PC-9 (cell line): ENCODE measurements at regions of chr3 and their contacts with region 1.

Region 1: GRCh38 chr3:160941885-160942494 is 163.2 kb downstream of the B3GALNT1 start:
- DNase-seq: peak; percentile 50 to 66
- H3K4me3 ChIP-seq: no peak overlapping the region
- H3K27ac ChIP-seq: no peak overlapping the region
- H3K4me1 ChIP-seq: no peaks in the 10 kb centered on the region
- H3K27me3 ChIP-seq: no peaks in the 10 kb centered on the region
- CTCF ChIP-seq: peak; percentile 93

Region 2: GRCh38 chr3:160577556-160578195 is 364.3 kb before region 1 on chr3:
- CTCF ChIA-PET with region 1: interaction called, 3 read pairs
- POLR2A ChIA-PET with region 1: no interaction called
- intact Hi-C with region 1: loop called (anchors 1 kb)
- DNase-seq: peak in 1 of 2 experiments; percentile 44
- H3K4me3 ChIP-seq: no peak overlapping the region
- H3K27ac ChIP-seq: no peak overlapping the region
- H3K4me1 ChIP-seq: peaks cover 7% of the 10 kb centered on the region; the same call in 1 of the 2 replicates
- H3K27me3 ChIP-seq: no peaks in the 10 kb centered on the region
- CTCF ChIP-seq: peak; percentile 44

Region 3: GRCh38 chr3:160686955-160687535 is 254.9 kb before region 1 on chr3:
- CTCF ChIA-PET with region 1: interaction called, 4 read pairs
- POLR2A ChIA-PET with region 1: no interaction called
- intact Hi-C with region 1: loop called (anchors 5 kb)
- DNase-seq: no peak
- H3K4me3 ChIP-seq: no peak overlapping the region
- H3K27ac ChIP-seq: no peak overlapping the region
- H3K4me1 ChIP-seq: no peaks in the 10 kb centered on the region
- H3K27me3 ChIP-seq: no peaks in the 10 kb centered on the region
- CTCF ChIP-seq: peak; percentile 73

Region 4: DNA sequence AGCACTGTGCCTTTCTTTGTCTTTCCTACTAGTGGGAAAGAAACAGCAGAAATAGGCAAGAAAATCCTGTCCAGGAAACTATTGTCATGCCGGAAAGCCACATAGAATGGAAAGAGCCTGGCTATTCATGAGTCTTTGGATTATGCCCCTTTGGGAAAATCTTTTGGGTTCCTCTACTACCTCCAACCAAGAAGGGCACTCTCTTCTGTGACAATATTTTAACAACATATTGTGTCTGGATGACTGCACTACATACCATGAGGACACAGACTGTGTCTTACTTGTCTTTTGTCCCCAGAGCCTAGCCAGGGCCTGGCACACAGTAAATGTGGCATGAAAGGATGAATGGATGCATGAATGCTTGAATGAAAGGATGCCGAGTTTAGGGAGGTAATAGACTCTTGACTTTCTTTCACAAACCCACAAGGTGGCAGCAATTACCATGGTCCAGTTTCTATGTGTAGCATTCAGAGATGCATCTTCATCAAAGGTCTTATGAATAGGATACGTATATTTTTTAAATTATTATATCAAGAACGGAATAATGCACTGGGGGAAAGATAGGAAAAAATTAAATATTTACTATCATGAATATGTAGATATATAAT is 234.7 kb before region 1 on chr3:
- CTCF ChIA-PET with region 1: interaction called, 4 read pairs
- POLR2A ChIA-PET with region 1: interaction called, 3 read pairs
- intact Hi-C with region 1: loop called (anchors 1 kb)
- DNase-seq: peak; percentile 21 to 41
- H3K4me3 ChIP-seq: no peak overlapping the region
- H3K27ac ChIP-seq: no peak overlapping the region
- H3K4me1 ChIP-seq: no peaks in the 10 kb centered on the region
- H3K27me3 ChIP-seq: no peaks in the 10 kb centered on the region
- CTCF ChIP-seq: peak; percentile 76

Region 5: DNA sequence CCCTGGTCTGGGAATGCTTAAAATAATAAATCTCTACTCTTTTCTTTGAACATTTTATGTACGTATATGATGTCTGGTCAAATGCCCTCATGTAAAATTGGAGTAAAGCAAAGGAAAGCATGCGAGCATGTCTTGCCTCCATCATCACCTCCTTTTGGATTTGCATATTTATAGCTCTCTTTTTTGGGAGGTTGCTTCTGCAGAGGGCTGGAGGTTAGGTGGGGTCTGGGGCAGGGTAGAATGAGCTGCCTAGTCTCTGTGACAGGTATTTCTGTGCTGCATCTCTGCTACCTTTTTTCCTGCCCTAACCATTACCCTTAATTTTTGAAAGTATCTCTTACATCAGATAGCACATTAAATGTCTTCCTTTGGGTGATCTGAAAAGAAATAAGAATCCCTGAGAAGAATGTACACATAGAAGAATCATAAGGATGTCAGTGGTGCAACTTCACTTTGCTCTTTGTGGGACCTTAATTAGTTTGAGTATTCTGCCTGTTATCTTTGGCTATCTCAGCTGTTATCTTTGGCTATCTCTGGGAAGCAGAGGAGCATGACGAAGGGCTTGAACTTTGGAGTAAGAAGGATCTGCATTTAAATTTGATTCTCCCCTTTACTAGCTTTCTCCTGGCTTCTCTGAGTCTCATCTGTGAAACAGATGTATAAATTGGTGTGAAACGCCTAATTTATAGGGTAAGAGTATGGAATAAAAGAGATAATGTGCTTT is 145.7 kb before region 1 on chr3:
- CTCF ChIA-PET with region 1: no interaction called
- POLR2A ChIA-PET with region 1: no interaction called
- intact Hi-C with region 1: no loop called
- DNase-seq: no peak
- H3K4me3 ChIP-seq: no peak overlapping the region
- H3K27ac ChIP-seq: no peak overlapping the region
- H3K4me1 ChIP-seq: peaks cover 15% of the 10 kb centered on the region
- H3K27me3 ChIP-seq: no peaks in the 10 kb centered on the region
- CTCF ChIP-seq: no peak